Heart left ventricle (tissue), 16 donors: ENCODE measurements at regions of chr4 and their contacts with region 1.

Region 1: DNA sequence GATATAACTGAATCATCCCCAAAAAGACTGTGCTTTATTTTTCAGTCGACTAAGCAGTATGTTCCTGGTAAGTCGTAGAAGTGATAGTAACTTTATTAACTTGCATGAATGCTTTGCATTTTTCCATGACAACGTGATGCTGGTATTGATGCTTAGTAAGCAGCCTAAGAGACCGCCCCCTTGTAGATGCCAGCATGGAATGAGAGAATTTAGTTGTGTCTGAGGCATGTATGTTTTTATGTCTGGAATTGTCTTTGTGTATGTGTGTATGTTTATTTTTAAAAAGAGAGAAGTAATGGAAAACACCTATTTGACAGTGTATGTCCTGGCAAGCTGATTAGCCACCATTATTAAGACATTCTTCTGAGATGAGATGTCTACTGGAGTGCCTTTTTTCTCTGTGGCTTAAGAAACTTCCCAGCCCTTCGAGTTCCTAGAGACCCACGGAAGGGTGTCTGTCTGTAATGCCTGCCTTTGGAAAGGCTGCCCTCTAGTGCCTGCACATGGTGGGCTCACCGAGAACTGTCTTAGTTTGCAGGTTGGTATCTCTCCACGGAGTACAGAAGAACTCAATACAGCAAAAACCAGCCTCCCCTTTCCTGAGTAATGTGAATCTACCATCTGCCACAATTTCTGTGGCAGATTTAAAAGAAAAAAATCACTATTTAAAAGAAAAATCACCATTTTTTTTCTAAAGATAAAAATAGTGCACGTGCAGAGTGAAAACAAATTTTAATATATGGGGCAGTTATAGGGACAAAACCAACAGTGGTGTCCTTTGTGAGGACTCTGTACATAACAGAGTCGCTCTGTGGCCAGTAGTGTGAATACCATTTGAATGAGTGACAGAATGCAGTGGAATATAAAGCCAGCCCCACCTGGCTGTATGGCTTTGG is 85.9 kb downstream of the AASDH start:
- DNase-seq: peak in 4 of 5 donors; percentile 46 to 77 (median 56)
- ATAC-seq: peak; percentile 58 to 98 (median 91)
- H3K4me3 ChIP-seq: no peak overlapping the region
- H3K27ac ChIP-seq: no peak overlapping the region
- H3K4me1 ChIP-seq: peaks cover 0 to 9% (median 0%) of the 10 kb centered on the region in 12 donors
- H3K27me3 ChIP-seq: peaks cover 0 to 6% (median 0%) of the 10 kb centered on the region in 9 donors
- CTCF ChIP-seq: peak; percentile 60 to 92 (median 74)
- POLR2A ChIP-seq: no peak

Region 2: DNA sequence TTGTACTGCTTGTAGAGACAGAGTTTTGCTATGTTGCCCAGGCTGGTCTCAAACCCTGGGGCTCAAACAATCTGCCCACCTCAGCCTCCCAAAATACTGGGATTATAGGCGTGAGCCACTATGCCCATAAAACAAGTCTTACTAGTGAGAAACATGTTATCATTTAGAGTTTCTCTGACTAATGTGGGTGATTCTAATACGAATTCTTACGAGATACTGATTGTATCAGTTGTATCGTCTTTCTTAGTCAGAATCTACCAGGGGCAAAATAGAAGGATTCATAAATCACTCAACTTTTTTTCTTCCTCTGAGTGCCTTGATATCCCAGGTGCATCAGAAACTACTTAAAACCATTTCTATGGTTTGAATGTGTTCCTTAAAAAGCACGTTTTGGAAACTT is 650.9 kb before region 1 on chr4:
- intact Hi-C with region 1: no loop called
- DNase-seq: no peak
- ATAC-seq: no peak
- H3K4me3 ChIP-seq: no peak overlapping the region
- H3K27ac ChIP-seq: no peak overlapping the region
- H3K4me1 ChIP-seq: no peaks in the 10 kb centered on the region
- H3K27me3 ChIP-seq: peaks cover 0 to 6% (median 0%) of the 10 kb centered on the region in 9 donors
- CTCF ChIP-seq: no peak
- POLR2A ChIP-seq: no peak

Region 3: GRCh38 chr4:56048702-56049431 is 252.6 kb before region 1 on chr4:
- intact Hi-C with region 1: loop called in 2 of 10 experiments (anchors 10 kb)
- DNase-seq: peak; percentile 13 to 79 (median 28)
- ATAC-seq: peak; percentile 51 to 95 (median 80)
- H3K4me3 ChIP-seq: peak overlapping the region; percentile 39 to 68 (median 58)
- H3K27ac ChIP-seq: peak overlapping the region in 1 of 12 donors; percentile 10
- H3K4me1 ChIP-seq: peaks cover 0 to 18% (median 5%) of the 10 kb centered on the region in 12 donors
- H3K27me3 ChIP-seq: peaks cover 0 to 52% (median 20%) of the 10 kb centered on the region in 9 donors
- CTCF ChIP-seq: peak in 7 of 12 donors; percentile 11 to 58 (median 29)
- POLR2A ChIP-seq: no peak

Region 4: GRCh38 chr4:56055027-56055977 is 246.1 kb before region 1 on chr4:
- intact Hi-C with region 1: loop called in 2 of 10 experiments (anchors 10 kb)
- DNase-seq: no peak
- ATAC-seq: no peak
- H3K4me3 ChIP-seq: no peak overlapping the region
- H3K27ac ChIP-seq: no peak overlapping the region
- H3K4me1 ChIP-seq: no peaks in the 10 kb centered on the region
- H3K27me3 ChIP-seq: peaks cover 0 to 73% (median 19%) of the 10 kb centered on the region in 9 donors
- CTCF ChIP-seq: no peak
- POLR2A ChIP-seq: no peak